Heart left ventricle (tissue), 16 donors: ENCODE measurements at regions of chr5 and their contacts with region 1.

Region 1: GRCh38 chr5:36397901-36398536 is 96.3 kb upstream of the RANBP3L start:
- DNase-seq: no peak
- ATAC-seq: peak in 3 of 4 donors; percentile 58 to 69 (median 62)
- H3K4me3 ChIP-seq: no peak overlapping the region
- H3K27ac ChIP-seq: no peak overlapping the region
- H3K4me1 ChIP-seq: peaks cover 0 to under 1% (median 0%) of the 10 kb centered on the region in 12 donors
- H3K27me3 ChIP-seq: no peaks in the 10 kb centered on the region
- CTCF ChIP-seq: peak; percentile 7 to 54 (median 40)
- POLR2A ChIP-seq: no peak

Region 2: GRCh38 chr5:36177715-36178523 is 220.1 kb before region 1 on chr5:
- intact Hi-C with region 1: loop called in 6 of 10 experiments (anchors 5 to 10 kb)
- DNase-seq: no peak
- ATAC-seq: peak in 1 of 4 donors; percentile 60
- H3K4me3 ChIP-seq: no peak overlapping the region
- H3K27ac ChIP-seq: no peak overlapping the region
- H3K4me1 ChIP-seq: no peaks in the 10 kb centered on the region
- H3K27me3 ChIP-seq: no peaks in the 10 kb centered on the region
- CTCF ChIP-seq: peak; percentile 33 to 68 (median 50)
- POLR2A ChIP-seq: no peak

Region 3: GRCh38 chr5:36264202-36264760 is 133.7 kb before region 1 on chr5:
- intact Hi-C with region 1: loop called in 9 of 10 experiments (anchors 2 to 10 kb)
- DNase-seq: no peak
- ATAC-seq: no peak
- H3K4me3 ChIP-seq: no peak overlapping the region
- H3K27ac ChIP-seq: no peak overlapping the region
- H3K4me1 ChIP-seq: no peaks in the 10 kb centered on the region
- H3K27me3 ChIP-seq: no peaks in the 10 kb centered on the region
- CTCF ChIP-seq: no peak
- POLR2A ChIP-seq: no peak

Region 4: DNA sequence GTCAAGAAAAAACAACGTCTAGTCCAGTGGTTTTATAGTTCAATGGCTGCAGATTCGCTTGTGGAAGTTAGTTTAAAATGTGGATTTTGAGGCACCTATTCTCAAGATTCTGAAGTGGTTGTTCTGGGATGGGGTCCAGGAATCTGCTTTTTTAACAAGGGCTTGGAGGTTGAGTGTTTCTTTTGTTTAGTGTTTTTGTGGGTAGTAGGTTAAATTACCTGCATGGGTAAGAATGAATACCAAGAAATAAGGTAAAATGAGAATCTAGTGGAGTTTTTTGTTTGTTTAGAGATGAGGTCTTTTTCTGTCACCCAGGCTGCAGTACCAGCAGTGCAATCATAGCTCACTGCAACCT is 127.8 kb before region 1 on chr5:
- intact Hi-C with region 1: loop called in 9 of 10 experiments (anchors 2 to 10 kb)
- DNase-seq: no peak
- ATAC-seq: no peak
- H3K4me3 ChIP-seq: no peak overlapping the region
- H3K27ac ChIP-seq: no peak overlapping the region
- H3K4me1 ChIP-seq: peaks cover 0 to 12% (median 0%) of the 10 kb centered on the region in 12 donors
- H3K27me3 ChIP-seq: no peaks in the 10 kb centered on the region
- CTCF ChIP-seq: no peak
- POLR2A ChIP-seq: no peak